ENCODE measurements at regions of chr11 and their contacts with region 1.

Region 1: DNA sequence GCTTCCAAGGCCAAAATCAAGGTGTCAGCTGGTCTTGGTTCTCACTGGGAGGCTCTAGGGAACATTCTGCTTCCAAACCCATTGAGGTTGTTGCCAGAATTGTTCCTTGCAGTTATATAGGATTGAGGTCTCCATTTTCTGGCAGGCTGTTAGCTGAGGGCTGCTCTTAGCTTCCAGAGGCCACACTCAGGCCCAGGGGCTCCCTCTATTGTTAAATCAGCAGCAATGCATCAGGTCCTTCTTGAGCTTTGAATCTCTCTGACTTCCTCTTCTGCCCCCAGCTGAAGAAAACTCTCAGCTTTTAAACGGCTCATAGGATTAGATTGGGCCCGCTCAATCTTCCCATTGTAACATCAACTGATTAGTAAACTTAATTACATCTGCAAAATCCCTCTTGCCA is 39.3 kb upstream of the BSX start:
- DNase-seq: peak in 1 of 10 donors; percentile 13
- H3K4me3 ChIP-seq: no peak overlapping the region
- H3K27ac ChIP-seq: no peak overlapping the region
- H3K27me3 ChIP-seq: peaks cover 0 to 16% (median 0%) of the 10 kb centered on the region in 45 donors
- CTCF ChIP-seq: peak in 47 of 56 donors; percentile 12 to 51 (median 39)

Region 2: DNA sequence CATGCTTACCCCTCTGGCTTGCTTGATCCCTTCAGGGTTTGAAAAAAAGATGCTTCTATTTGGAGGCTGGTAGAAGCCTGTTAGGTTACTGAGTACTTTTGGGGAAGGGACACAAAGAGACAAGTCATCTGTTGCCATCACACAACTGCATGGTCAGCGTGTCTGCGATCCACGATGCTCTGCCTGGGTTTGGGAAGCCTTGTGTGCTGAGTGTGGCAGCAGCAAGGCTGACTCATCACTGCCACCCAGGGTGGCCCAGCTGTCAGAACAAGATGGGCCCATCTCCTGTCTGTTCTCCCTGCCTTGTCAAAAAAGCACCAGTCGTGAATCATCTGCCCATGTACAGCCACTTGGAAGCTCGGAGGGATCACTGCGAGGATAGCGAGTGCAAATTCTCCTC is 339.2 kb before region 1 on chr11:
- intact Hi-C with region 1: no loop called
- DNase-seq: peak in 5 of 10 donors; percentile 35 to 72 (median 70)
- H3K4me3 ChIP-seq: no peak overlapping the region
- H3K27ac ChIP-seq: peak overlapping the region in 1 of 59 donors; percentile 74
- H3K27me3 ChIP-seq: no peaks in the 10 kb centered on the region
- CTCF ChIP-seq: no peak

Region 3: GRCh38 chr11:122863704-122864326 is 157.2 kb before region 1 on chr11:
- intact Hi-C with region 1: loop called (anchors 5 to 10 kb)
- DNase-seq: peak in 9 of 10 donors; percentile 33 to 69 (median 50)
- H3K4me3 ChIP-seq: peak overlapping the region in 32 of 59 donors; percentile 0 to 45 (median 20)
- H3K27ac ChIP-seq: peak overlapping the region in 3 of 59 donors; percentile 40 to 91 (median 51)
- H3K27me3 ChIP-seq: peaks cover 0 to 9% (median 0%) of the 10 kb centered on the region in 45 donors
- CTCF ChIP-seq: peak; percentile 68 to 92 (median 82)

Region 4: GRCh38 chr11:122910775-122911174 is 110.2 kb before region 1 on chr11:
- intact Hi-C with region 1: loop called in 1 of 2 experiments (anchors 2 kb)
- DNase-seq: no peak
- H3K4me3 ChIP-seq: no peak overlapping the region
- H3K27ac ChIP-seq: no peak overlapping the region
- H3K27me3 ChIP-seq: peaks cover 0 to 3% (median 0%) of the 10 kb centered on the region in 45 donors
- CTCF ChIP-seq: peak in 50 of 56 donors; percentile 13 to 69 (median 42)

Region 5: DNA sequence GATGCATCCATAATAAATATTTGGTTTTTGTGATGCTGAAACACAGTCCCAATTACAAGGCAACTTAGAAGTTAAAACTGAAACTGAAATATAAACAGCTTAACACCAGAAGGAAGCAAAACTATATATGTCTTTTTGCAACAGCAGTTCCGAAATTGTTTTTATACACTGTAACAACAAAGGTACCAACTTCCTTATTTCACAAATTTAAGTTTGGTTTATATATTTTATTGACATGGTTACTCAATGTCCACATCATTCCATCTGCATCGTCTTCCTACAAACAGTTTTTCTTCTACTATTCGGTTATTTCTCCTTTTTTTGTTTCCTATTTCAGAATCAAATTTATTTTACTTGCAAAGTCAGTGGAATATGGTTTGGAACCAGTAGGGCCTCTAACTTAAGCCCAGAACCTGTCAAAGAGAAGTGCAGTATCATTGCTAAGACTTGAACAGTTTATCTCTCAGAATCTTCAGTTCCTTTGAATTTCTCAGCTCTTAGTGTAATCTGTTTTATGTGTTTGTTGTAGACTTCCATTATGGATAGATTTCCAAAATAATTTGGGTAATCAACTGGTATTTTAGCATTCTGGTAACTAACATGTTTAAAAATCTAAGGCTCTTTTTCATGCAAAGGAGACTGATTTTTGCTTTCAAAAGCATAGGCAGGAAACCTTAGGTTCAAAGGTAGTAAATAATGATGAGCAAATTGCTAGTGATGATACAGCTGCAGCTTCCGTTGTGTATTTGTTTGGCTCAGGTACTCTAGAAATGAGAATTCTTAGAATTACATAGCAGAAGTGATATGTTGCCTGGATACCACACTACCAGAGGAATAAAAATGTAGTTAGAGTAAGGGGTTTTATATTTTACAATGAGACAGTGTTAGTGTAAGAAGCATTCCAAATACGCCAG is 49.2 kb after region 1 on chr11:
- intact Hi-C with region 1: no loop called
- DNase-seq: no peak
- H3K4me3 ChIP-seq: peak overlapping the region in 58 of 59 donors; percentile 3 to 59 (median 38)
- H3K27ac ChIP-seq: peak overlapping the region in 35 of 59 donors; percentile 1 to 73 (median 35)
- H3K27me3 ChIP-seq: no peaks in the 10 kb centered on the region
- CTCF ChIP-seq: no peak

Region 6: DNA sequence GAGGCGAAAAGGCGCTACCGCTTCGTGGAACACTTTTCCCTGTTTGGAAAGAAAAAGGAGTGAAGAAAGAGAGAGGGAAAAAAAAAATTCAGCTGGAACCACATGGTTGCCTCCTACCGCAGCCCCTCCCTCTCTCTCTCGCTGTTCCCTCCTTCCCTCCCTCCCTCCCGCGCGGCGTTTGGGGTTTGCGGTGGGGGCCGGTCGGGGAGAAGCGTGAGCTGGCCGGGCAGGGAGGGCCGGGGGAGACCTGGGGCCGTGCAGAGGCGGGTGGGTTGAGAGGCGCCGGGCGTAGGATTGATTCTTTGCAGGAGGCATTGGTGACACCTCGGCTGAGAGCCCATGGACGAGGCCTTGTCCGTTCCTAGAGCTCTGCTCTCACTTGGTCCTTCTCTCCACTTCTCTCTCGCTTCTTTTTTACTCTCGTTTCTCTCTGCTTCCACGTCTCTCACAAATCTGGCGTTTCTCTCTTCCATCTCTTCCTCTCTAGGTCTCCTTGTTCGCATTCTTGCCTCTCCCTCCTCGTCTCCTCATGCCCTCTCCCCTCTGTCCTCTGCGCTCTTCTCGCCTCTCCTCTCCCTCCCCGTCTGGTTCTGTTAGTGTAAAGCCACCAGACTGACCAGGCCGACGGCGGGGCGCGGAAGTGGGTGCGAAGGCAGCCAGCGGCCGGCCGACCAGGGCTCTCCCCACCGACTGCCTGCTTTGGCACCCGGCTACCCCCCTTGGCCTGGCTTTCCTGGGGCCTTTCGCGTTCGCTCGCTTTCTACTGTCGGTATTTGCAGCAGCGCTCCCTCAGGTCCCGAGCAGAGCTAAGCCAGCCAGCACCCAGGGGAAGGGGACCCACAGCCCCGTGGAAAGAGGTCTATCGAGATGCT is 174.5 kb after region 1 on chr11 and contains the start of gene CLMP:
- intact Hi-C with region 1: no loop called
- DNase-seq: peak in 2 of 10 donors; percentile 36 to 39
- H3K4me3 ChIP-seq: peak within 1 kb of the TSS; percentile 15 to 69 (median 49)
- H3K27ac ChIP-seq: peak within 1 kb of the TSS in 26 of 59 donors; percentile 1 to 72 (median 36)
- H3K27me3 ChIP-seq: peaks cover 0 to 44% (median 14%) of the 10 kb centered on the region in 45 donors
- CTCF ChIP-seq: no peak
- total RNA-seq, gene CLMP: 1.4 to 12.3 (median 6.0) TPM

Measured in dorsolateral prefrontal cortex (tissue), 120 donors.